Caco-2 (cell line): ENCODE measurements at regions of chr5 and their contacts with region 1.

Region 1: DNA sequence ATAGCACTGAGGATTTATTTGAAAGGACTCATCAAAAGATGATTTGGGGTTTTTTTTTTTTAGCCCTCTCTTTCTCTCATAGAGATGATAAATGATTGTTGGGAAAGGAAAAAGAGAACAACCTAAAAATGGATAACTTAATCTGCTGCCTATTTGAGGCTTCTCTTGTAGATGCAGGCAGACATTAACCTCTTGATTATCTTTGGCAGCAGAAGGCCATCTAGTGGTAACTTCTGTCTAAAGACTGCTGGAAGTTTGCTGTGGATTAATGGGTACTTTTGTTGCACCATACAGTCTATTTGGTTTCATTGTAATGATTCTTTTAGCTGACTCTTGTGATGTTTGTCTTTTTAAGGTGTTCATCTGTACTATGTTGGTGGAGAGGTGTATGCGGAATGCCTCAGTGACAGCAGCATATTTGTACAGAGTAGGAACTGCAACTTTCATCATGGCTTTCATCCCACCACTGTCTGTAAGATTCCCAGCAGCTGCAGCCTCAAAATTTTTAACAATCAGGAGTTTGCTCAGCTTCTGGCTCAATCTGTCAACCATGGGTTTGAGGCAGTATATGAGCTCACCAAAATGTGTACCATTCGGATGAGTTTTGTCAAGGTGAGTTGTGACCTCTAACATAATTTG is 18.8 kb downstream of the SMIM32 start:
- DNase-seq: peak in 1 of 2 experiments; percentile 63
- H3K4me3 ChIP-seq: no peak overlapping the region
- H3K4me3 Mint-ChIP-seq: no peak overlapping the region
- H3K27ac Mint-ChIP-seq: no peak overlapping the region
- H3K4me1 ChIP-seq: no peaks in the 10 kb centered on the region; the same call in 1 of the 2 replicates
- H3K4me1 Mint-ChIP-seq: peaks cover 6% of the 10 kb centered on the region
- H3K27me3 ChIP-seq: no peaks in the 10 kb centered on the region
- H3K27me3 Mint-ChIP-seq: no peaks in the 10 kb centered on the region
- CTCF ChIP-seq: peak; percentile 68 to 84

Region 2: DNA sequence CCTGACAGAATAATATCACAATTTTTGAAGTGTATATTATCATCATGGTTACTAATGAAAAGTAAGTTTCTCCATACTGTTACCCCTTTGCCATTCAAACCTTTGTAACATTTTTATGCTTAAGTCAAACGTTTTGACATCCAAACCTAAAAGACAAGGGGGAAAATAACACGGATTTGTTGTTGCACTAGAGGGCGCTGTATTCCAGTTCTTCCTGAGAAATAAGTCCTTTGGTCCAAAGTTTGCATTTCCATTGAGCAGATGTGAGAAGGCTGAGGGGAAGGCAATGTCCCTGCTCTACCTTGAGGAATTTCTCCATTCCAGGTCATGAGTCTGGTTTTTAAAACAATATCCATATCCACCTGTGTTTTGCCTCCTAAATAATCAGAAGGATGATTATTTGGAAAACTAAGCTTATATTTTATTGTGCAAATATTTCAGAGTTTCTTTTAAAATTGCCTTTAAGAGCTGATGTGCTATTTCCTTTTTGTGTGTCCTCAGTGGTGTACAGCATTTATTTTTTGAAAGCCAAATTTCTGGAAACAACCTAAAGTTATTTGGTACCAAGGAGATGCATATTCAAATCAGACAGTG is 229.1 kb before region 1 on chr5:
- CTCF ChIA-PET with region 1: no interaction called
- POLR2A ChIA-PET with region 1: no interaction called
- intact Hi-C with region 1: loop called (anchors 1 kb)
- DNase-seq: peak; percentile 60 to 76
- H3K4me3 ChIP-seq: no peak overlapping the region
- H3K4me3 Mint-ChIP-seq: no peak overlapping the region
- H3K27ac Mint-ChIP-seq: no peak overlapping the region
- H3K4me1 ChIP-seq: peaks cover under 1% of the 10 kb centered on the region; the same call in 1 of the 2 replicates
- H3K4me1 Mint-ChIP-seq: no peaks in the 10 kb centered on the region
- H3K27me3 ChIP-seq: no peaks in the 10 kb centered on the region
- H3K27me3 Mint-ChIP-seq: no peaks in the 10 kb centered on the region
- CTCF ChIP-seq: peak; percentile 79 to 80

Region 3: GRCh38 chr5:136094189-136094912 is 79.8 kb before region 1 on chr5:
- CTCF ChIA-PET with region 1: no interaction called
- POLR2A ChIA-PET with region 1: no interaction called
- intact Hi-C with region 1: loop called (anchors 1 kb)
- DNase-seq: peak; percentile 51 to 75
- H3K4me3 ChIP-seq: no peak overlapping the region
- H3K4me3 Mint-ChIP-seq: peak overlapping the region; percentile 9
- H3K27ac Mint-ChIP-seq: peak overlapping the region; percentile 69
- H3K4me1 ChIP-seq: peaks cover 65% of the 10 kb centered on the region
- H3K4me1 Mint-ChIP-seq: peaks cover 67% of the 10 kb centered on the region
- H3K27me3 ChIP-seq: no peaks in the 10 kb centered on the region
- H3K27me3 Mint-ChIP-seq: no peaks in the 10 kb centered on the region
- CTCF ChIP-seq: no peak

Region 4: DNA sequence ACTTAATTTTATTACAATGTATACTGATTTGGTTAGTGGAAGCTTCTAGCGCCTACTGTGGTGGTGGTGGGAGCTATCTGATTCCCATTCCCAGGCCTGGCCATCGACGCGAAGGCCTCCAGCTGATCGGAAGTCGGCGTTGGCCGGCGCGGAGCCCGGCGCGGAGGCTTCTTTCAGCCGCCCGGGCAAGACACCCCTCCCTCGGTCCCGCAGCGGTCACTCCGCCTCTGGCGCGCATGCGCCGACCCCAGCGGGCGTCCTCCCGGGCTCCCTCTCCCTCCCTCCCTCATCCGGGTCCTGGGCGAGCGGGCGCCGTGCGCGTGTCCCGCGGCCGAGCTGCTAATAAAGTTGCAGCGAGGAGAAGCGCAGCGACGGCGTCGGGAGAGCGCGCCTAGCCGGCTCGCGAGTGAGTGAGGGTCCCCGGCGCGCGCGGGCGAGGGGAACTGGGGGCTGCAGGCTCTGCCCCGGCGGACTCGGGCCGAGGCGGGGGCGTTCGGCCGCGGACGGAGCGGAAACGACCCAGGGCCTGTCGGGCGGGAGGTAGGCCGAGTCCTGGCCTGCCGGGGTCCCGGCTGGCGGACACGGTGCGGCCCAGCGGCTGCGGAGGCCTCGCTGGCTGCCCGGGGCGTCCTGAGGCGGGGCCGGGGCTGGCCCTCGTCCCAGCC is 41.5 kb before region 1 on chr5 and contains the start of gene SMAD5:
- CTCF ChIA-PET with region 1: interaction called, 4 read pairs
- POLR2A ChIA-PET with region 1: no interaction called
- intact Hi-C with region 1: loop called (anchors 2 kb)
- DNase-seq: peak; percentile 97 to 98
- H3K4me3 ChIP-seq: peak within 1 kb of the TSS; percentile 80
- H3K4me3 Mint-ChIP-seq: peak within 1 kb of the TSS; percentile 78
- H3K27ac Mint-ChIP-seq: peak within 1 kb of the TSS; percentile 94
- H3K4me1 ChIP-seq: peaks cover 44% of the 10 kb centered on the region
- H3K4me1 Mint-ChIP-seq: peaks cover 35% of the 10 kb centered on the region
- H3K27me3 ChIP-seq: no peaks in the 10 kb centered on the region
- H3K27me3 Mint-ChIP-seq: no peaks in the 10 kb centered on the region
- CTCF ChIP-seq: no peak
- total RNA-seq, gene SMAD5: 141 and 142 TPM in 2 replicates

Region 5: DNA sequence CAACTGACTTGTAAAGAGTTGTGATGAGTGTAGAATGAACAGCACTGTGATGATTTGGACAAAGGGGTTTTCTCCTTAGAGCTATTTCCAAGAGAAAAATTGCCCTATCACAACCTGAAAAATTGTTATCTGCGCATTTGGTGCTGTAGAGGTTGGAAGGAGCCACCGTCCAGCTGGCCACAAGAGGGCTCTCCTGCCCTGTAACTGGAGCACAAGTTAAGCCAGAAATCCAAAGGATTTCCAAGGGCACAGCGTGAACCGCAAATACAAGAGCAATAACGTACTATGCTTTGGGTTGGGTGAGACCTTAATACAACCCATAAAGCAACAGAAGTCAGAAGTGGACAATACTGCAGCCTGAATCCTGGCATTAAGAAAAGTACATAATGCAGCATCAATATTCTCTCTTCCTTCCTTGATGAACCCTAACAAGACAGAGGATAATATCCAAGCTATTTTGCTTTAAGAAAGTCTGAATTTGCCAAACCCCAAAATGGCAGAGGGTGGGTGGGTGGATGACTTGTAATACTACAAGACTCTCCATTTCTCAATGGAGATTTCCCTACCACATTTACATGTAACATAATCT is 75.6 kb after region 1 on chr5:
- CTCF ChIA-PET with region 1: no interaction called
- POLR2A ChIA-PET with region 1: no interaction called
- intact Hi-C with region 1: no loop called
- DNase-seq: peak; percentile 67 to 70
- H3K4me3 ChIP-seq: no peak overlapping the region
- H3K4me3 Mint-ChIP-seq: no peak overlapping the region
- H3K27ac Mint-ChIP-seq: no peak overlapping the region
- H3K4me1 ChIP-seq: no peaks in the 10 kb centered on the region
- H3K4me1 Mint-ChIP-seq: no peaks in the 10 kb centered on the region
- H3K27me3 ChIP-seq: no peaks in the 10 kb centered on the region
- H3K27me3 Mint-ChIP-seq: peaks cover 17% of the 10 kb centered on the region
- CTCF ChIP-seq: peak; percentile 84 to 97